ENCODE measurements at regions of chr5 and their contacts with region 1.

Region 1: GRCh38 chr5:13478831-13479465 is 465.5 kb downstream of the DNAH5 start:
- DNase-seq: peak in 2 of 9 experiments; percentile 19 to 33
- ATAC-seq: no peak
- H3K4me3 ChIP-seq: no peak overlapping the region
- H3K4me3 Mint-ChIP-seq: no peak overlapping the region
- H3K27ac ChIP-seq: no peak overlapping the region
- H3K27ac Mint-ChIP-seq: no peak overlapping the region
- H3K4me1 ChIP-seq: no peaks in the 10 kb centered on the region
- H3K4me1 Mint-ChIP-seq: no peaks in the 10 kb centered on the region
- H3K27me3 ChIP-seq: no peaks in the 10 kb centered on the region
- H3K27me3 Mint-ChIP-seq: no peaks in the 10 kb centered on the region
- CTCF ChIP-seq: no peak

Region 2: GRCh38 chr5:12292610-12293204 is 1186.2 kb before region 1 on chr5:
- CTCF ChIA-PET with region 1: no interaction called
- POLR2A ChIA-PET with region 1: no interaction called
- intact Hi-C with region 1: loop called (anchors 5 kb)
- DNase-seq: peak in 2 of 9 experiments; percentile 9 to 14
- ATAC-seq: no peak
- H3K4me3 ChIP-seq: no peak overlapping the region
- H3K4me3 Mint-ChIP-seq: no peak overlapping the region
- H3K27ac ChIP-seq: no peak overlapping the region
- H3K27ac Mint-ChIP-seq: no peak overlapping the region
- H3K4me1 ChIP-seq: no peaks in the 10 kb centered on the region
- H3K4me1 Mint-ChIP-seq: no peaks in the 10 kb centered on the region
- H3K27me3 ChIP-seq: no peaks in the 10 kb centered on the region
- H3K27me3 Mint-ChIP-seq: no peaks in the 10 kb centered on the region
- CTCF ChIP-seq: no peak